IMR-90 (cell line): ENCODE measurements at regions of chr22 and their contacts with region 1.

Region 1: GRCh38 chr22:46071451-46072109 is 78.7 kb upstream of the PPARA start:
- DNase-seq: peak; percentile 90
- ATAC-seq: peak; percentile 54
- H3K4me3 ChIP-seq: peak overlapping the region; percentile 96
- H3K27ac ChIP-seq: peak overlapping the region; percentile 98
- H3K4me1 ChIP-seq: peaks cover 32% of the 10 kb centered on the region
- H3K27me3 ChIP-seq: no peaks in the 10 kb centered on the region
- CTCF ChIP-seq: no peak
- POLR2A ChIP-seq: no peak
- RAD21 ChIP-seq: no peak

Region 2: DNA sequence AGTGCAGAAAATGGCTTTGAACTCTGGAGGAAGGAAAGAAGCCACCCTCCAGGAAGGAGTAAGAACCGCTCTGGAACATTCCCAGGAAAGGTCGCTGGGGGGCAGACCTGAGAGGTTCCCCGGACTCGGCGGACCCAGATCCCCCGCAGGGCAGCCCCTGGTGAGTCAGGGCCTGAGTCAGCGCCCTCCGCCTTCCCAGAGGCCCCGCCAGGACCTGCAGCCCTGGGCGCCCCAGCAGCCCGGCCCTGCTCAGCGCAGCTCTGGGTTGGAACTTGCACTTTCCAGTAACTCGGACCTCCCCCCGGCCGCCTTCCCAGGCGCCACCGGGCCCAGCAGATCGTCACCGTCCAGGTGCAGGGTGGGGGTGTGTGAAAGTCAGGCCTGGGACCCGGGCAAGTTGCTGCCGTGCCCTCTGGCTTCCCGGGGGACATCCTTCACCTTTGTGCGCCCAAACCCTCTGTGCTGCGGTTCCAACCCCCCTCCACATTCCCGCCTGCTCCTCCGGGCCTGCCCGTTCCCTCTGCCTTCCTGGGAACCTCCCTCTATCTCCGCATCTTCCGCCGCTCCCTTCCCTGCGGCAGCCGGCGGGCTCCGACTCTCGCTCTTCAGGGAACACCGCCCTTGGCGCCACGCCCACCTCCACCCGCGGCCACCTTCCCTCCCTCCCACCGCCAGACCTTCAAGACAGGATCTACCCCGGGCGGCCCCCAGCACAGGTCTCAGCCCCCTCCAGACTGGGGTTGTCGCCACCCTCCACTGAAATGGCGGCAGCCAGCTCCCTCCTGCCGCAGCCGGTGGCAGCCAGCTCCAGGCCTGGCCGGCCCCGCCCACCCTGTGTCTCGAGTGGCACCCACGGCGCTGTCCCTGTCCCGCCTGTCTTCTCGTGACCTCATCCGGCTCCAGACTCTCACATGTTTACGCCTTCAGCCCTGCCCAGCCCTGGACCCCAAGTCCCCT is 57.8 kb before region 1 on chr22:
- CTCF ChIA-PET with region 1: interaction called, 4 read pairs
- POLR2A ChIA-PET with region 1: interaction called, 3 read pairs
- dilution Hi-C with region 1: no loop called
- in situ Hi-C with region 1: no loop called
- intact Hi-C with region 1: loop called (anchors 1 kb)
- DNase-seq: peak; percentile 96
- ATAC-seq: peak; percentile 98
- H3K4me3 ChIP-seq: peak overlapping the region; percentile 58
- H3K27ac ChIP-seq: peak overlapping the region; percentile 92
- H3K4me1 ChIP-seq: peaks cover 10% of the 10 kb centered on the region
- H3K27me3 ChIP-seq: no peaks in the 10 kb centered on the region
- CTCF ChIP-seq: peak; percentile 81
- POLR2A ChIP-seq: peak; percentile 25
- RAD21 ChIP-seq: peak; percentile 71

Region 3: DNA sequence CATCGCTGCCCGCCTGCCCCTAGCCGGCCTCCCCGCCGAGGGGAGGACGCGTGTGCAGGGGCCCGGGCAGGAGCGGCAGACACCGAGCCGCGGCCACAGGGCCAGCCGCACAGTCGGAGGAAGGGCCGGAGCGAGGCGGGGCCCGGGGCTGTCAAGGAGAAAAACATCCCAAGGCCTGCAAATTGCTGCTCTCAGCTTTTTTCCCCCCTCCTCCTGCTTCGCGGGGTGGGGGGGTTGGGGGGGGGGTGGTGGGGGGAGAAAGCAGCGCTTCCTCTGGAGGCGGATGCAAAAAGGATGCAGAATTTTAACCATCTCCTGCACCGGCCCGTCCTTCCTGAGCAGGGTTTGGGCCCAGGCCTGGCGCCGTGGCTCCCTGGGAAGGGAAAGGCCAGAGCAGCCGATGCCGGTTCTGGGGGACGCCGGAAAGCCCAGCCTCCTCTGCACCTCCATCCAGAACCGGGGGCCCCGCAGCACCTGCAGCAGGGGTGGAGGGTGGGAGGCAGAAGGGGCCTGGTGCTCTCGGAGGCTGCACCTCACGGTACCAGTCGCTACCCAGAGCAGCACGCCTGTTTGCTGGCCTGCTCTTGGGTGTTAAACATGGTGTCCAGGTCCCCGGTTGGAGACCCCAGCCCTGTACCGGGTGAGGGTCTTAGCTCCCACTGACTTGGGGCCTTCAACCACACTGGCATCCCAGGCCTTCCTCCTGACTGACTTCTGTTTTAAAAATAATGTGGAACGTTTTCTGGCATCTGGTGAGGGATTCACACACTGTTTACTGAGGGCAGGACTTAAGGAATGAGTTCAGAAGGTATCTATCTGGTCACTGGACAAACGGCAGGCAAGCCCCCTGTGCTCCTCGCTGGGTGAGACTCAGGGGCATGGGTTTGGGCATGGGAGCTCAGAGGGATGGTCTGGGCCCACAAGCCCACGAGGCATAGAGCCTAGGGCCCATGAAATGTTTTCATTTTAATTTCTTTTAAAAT is 17.2 kb before region 1 on chr22:
- CTCF ChIA-PET with region 1: no interaction called
- POLR2A ChIA-PET with region 1: no interaction called
- dilution Hi-C with region 1: no loop called
- in situ Hi-C with region 1: no loop called
- intact Hi-C with region 1: loop called (anchors 2 kb)
- DNase-seq: peak; percentile 45
- ATAC-seq: peak; percentile 80
- H3K4me3 ChIP-seq: peak overlapping the region; percentile 77
- H3K27ac ChIP-seq: peak overlapping the region; percentile 53
- H3K4me1 ChIP-seq: peaks cover 26% of the 10 kb centered on the region
- H3K27me3 ChIP-seq: no peaks in the 10 kb centered on the region
- CTCF ChIP-seq: no peak
- POLR2A ChIP-seq: no peak
- RAD21 ChIP-seq: no peak

Region 4: GRCh38 chr22:46116491-46116958 is 44.9 kb after region 1 on chr22:
- CTCF ChIA-PET with region 1: interaction called, 3 read pairs
- POLR2A ChIA-PET with region 1: no interaction called
- dilution Hi-C with region 1: no loop called
- in situ Hi-C with region 1: no loop called
- intact Hi-C with region 1: loop called (anchors 5 kb)
- DNase-seq: peak; percentile 73
- ATAC-seq: peak; percentile 81
- H3K4me3 ChIP-seq: no peak overlapping the region
- H3K27ac ChIP-seq: no peak overlapping the region; the same call in 1 of the 2 replicates
- H3K4me1 ChIP-seq: peaks cover 15% of the 10 kb centered on the region
- H3K27me3 ChIP-seq: no peaks in the 10 kb centered on the region
- CTCF ChIP-seq: peak; percentile 98
- POLR2A ChIP-seq: no peak
- RAD21 ChIP-seq: peak; percentile 87